Activated CD8-positive, alpha-beta T cell treated with anti-CD3 and anti-CD28 coated beads for 36 hours (primary cell): ENCODE measurements at regions of chr17 and their contacts with region 1.

Region 1: GRCh38 chr17:3012926-3013581 is 50.4 kb downstream of the OR1D5 start:
- DNase-seq: peak; percentile 69
- ATAC-seq: peak; percentile 94
- H3K4me3 Mint-ChIP-seq: no peak overlapping the region
- H3K27ac Mint-ChIP-seq: no peak overlapping the region
- H3K4me1 Mint-ChIP-seq: no peaks in the 10 kb centered on the region
- H3K27me3 Mint-ChIP-seq: no peaks in the 10 kb centered on the region
- CTCF ChIP-seq: peak; percentile 68

Region 2: GRCh38 chr17:2828397-2829038 is 184.5 kb before region 1 on chr17:
- CTCF ChIA-PET with region 1: interaction called, 28 read pairs
- POLR2A ChIA-PET with region 1: no interaction called
- intact Hi-C with region 1: loop called (anchors 5 kb)
- DNase-seq: peak; percentile 84
- ATAC-seq: peak; percentile 93
- H3K4me3 Mint-ChIP-seq: no peak overlapping the region
- H3K27ac Mint-ChIP-seq: no peak overlapping the region
- H3K4me1 Mint-ChIP-seq: peaks cover 9% of the 10 kb centered on the region
- H3K27me3 Mint-ChIP-seq: peaks cover 16% of the 10 kb centered on the region
- CTCF ChIP-seq: peak; percentile 96

Region 3: GRCh38 chr17:2853111-2853721 is 159.8 kb before region 1 on chr17:
- CTCF ChIA-PET with region 1: interaction called, 96 read pairs
- POLR2A ChIA-PET with region 1: no interaction called
- intact Hi-C with region 1: loop called (anchors 5 kb)
- DNase-seq: peak; percentile 21
- ATAC-seq: peak; percentile 35
- H3K4me3 Mint-ChIP-seq: no peak overlapping the region
- H3K27ac Mint-ChIP-seq: no peak overlapping the region
- H3K4me1 Mint-ChIP-seq: peaks cover 13% of the 10 kb centered on the region
- H3K27me3 Mint-ChIP-seq: peaks cover 36% of the 10 kb centered on the region
- CTCF ChIP-seq: no peak

Region 4: GRCh38 chr17:2916461-2916860 is 96.6 kb before region 1 on chr17:
- CTCF ChIA-PET with region 1: no interaction called
- POLR2A ChIA-PET with region 1: no interaction called
- intact Hi-C with region 1: no loop called
- DNase-seq: no peak
- ATAC-seq: no peak
- H3K4me3 Mint-ChIP-seq: no peak overlapping the region
- H3K27ac Mint-ChIP-seq: no peak overlapping the region
- H3K4me1 Mint-ChIP-seq: no peaks in the 10 kb centered on the region
- H3K27me3 Mint-ChIP-seq: no peaks in the 10 kb centered on the region
- CTCF ChIP-seq: no peak